ENCODE measurements at regions of chr6 and their contacts with region 1.

Region 1: GRCh38 chr6:126804332-126805064 is 314.0 kb upstream of the RSPO3 start:
- DNase-seq: peak; percentile 18
- CTCF ChIP-seq: peak; percentile 71

Region 2: GRCh38 chr6:126821706-126822105 is 17.2 kb after region 1 on chr6:
- CTCF ChIA-PET with region 1: interaction called, 18 read pairs
- POLR2A ChIA-PET with region 1: no interaction called
- DNase-seq: no peak
- CTCF ChIP-seq: no peak